Caco-2 (cell line): ENCODE measurements at regions of chr2 and their contacts with region 1.

Region 1: GRCh38 chr2:215920244-215921100 is 92.9 kb downstream of the MREG start:
- DNase-seq: peak; percentile 71 to 83
- H3K4me3 ChIP-seq: no peak overlapping the region
- H3K4me3 Mint-ChIP-seq: no peak overlapping the region
- H3K27ac Mint-ChIP-seq: peak overlapping the region; percentile 45
- H3K4me1 ChIP-seq: peaks cover 23% of the 10 kb centered on the region
- H3K4me1 Mint-ChIP-seq: peaks cover 34% of the 10 kb centered on the region
- H3K27me3 ChIP-seq: no peaks in the 10 kb centered on the region
- H3K27me3 Mint-ChIP-seq: no peaks in the 10 kb centered on the region
- CTCF ChIP-seq: peak; percentile 88 to 91

Region 2: GRCh38 chr2:215002500-215002899 is 918.0 kb before region 1 on chr2:
- CTCF ChIA-PET with region 1: no interaction called
- POLR2A ChIA-PET with region 1: no interaction called
- intact Hi-C with region 1: loop called (anchors 2 kb)
- DNase-seq: peak; percentile 36 to 48
- H3K4me3 ChIP-seq: no peak overlapping the region
- H3K4me3 Mint-ChIP-seq: no peak overlapping the region
- H3K27ac Mint-ChIP-seq: no peak overlapping the region
- H3K4me1 ChIP-seq: no peaks in the 10 kb centered on the region
- H3K4me1 Mint-ChIP-seq: no peaks in the 10 kb centered on the region
- H3K27me3 ChIP-seq: no peaks in the 10 kb centered on the region
- H3K27me3 Mint-ChIP-seq: peaks cover 5% of the 10 kb centered on the region
- CTCF ChIP-seq: peak; percentile 63 to 65

Region 3: GRCh38 chr2:215435809-215436704 is 484.4 kb before region 1 on chr2 and contains the start of gene FN1:
- CTCF ChIA-PET with region 1: no interaction called
- POLR2A ChIA-PET with region 1: no interaction called
- intact Hi-C with region 1: loop called (anchors 5 kb)
- DNase-seq: peak; percentile 95 to 96
- H3K4me3 ChIP-seq: peak within 1 kb of the TSS; percentile 99
- H3K4me3 Mint-ChIP-seq: peak within 1 kb of the TSS; percentile 84
- H3K27ac Mint-ChIP-seq: peak within 1 kb of the TSS; percentile 94
- H3K4me1 ChIP-seq: peaks cover 40% of the 10 kb centered on the region
- H3K4me1 Mint-ChIP-seq: peaks cover 26% of the 10 kb centered on the region
- H3K27me3 ChIP-seq: no peaks in the 10 kb centered on the region
- H3K27me3 Mint-ChIP-seq: no peaks in the 10 kb centered on the region
- CTCF ChIP-seq: no peak
- total RNA-seq, gene FN1: 3,805 and 3,872 TPM in 2 replicates

Region 4: GRCh38 chr2:215505044-215505786 is 415.3 kb before region 1 on chr2:
- CTCF ChIA-PET with region 1: no interaction called
- POLR2A ChIA-PET with region 1: no interaction called
- intact Hi-C with region 1: loop called (anchors 5 kb)
- DNase-seq: peak; percentile 68 to 70
- H3K4me3 ChIP-seq: no peak overlapping the region
- H3K4me3 Mint-ChIP-seq: peak overlapping the region; percentile 54
- H3K27ac Mint-ChIP-seq: peak overlapping the region; percentile 46
- H3K4me1 ChIP-seq: peaks cover 42% of the 10 kb centered on the region
- H3K4me1 Mint-ChIP-seq: peaks cover 38% of the 10 kb centered on the region
- H3K27me3 ChIP-seq: no peaks in the 10 kb centered on the region
- H3K27me3 Mint-ChIP-seq: no peaks in the 10 kb centered on the region
- CTCF ChIP-seq: no peak

Region 5: DNA sequence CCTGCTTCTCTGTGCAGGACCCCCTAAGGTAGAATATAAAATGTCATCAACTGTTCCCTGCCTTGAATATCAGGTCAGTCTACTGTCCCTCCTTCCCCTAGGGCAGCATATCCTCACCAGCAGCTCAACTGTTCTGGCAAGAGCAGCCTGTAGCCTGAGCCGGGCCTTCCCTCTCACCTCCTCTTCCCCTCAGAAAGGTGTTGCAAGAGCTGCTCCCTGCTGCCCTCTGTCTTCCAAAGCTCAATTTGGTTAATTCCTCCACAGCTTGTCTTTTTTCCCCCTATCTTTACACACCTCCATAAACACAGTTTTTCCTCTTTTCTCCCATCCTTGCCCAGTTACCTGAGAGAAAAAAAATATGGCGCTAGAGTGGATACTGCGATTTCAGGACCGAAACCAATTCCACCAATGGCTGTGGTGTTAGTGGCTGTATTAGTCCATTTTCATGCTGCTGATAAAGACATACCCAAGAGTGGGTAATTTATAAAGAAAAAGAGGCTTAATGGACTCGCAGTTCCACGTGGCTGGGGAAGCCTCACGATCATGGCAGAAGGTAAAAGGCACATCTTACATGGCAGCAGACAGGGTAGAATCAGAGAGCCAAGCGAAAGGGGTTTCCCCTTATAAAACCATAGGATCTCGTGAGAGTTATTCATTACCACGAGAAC is 91.8 kb before region 1 on chr2:
- CTCF ChIA-PET with region 1: no interaction called
- POLR2A ChIA-PET with region 1: no interaction called
- intact Hi-C with region 1: loop called (anchors 1 kb)
- DNase-seq: peak; percentile 66 to 80
- H3K4me3 ChIP-seq: no peak overlapping the region
- H3K4me3 Mint-ChIP-seq: no peak overlapping the region
- H3K27ac Mint-ChIP-seq: peak overlapping the region; percentile 79
- H3K4me1 ChIP-seq: peaks cover 80% of the 10 kb centered on the region
- H3K4me1 Mint-ChIP-seq: peaks cover 32% of the 10 kb centered on the region
- H3K27me3 ChIP-seq: no peaks in the 10 kb centered on the region
- H3K27me3 Mint-ChIP-seq: no peaks in the 10 kb centered on the region
- CTCF ChIP-seq: peak; percentile 54 to 66